Lower leg skin (tissue), 4 donors: ENCODE measurements at regions of chr3 and their contacts with region 1.

Region 1: DNA sequence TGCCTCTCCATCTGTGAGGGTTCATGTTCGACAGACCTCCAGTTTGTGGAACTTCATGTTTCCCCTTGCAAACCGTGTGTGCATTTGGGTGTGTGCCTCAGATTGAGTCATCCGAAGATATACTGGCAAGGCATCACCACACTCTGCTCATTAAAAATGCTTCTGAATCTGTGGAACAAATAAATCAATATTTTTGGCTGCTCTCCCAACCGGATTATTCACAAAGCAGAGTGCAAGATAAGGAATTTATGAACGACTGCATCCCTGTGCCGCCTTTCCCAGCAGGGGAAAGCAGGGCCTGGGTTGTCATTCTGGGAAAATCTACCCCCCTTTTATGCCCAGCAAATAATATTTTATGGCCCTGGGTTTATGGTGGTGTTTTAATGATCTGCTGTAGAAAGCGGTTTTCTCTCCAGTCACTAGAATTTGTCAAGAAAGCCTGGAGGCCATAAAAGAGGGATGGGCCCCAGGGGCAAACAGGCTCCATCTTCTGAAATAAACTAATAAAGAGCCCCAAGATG is 4.2 kb upstream of the WNT5A start:
- DNase-seq: no peak
- H3K4me3 ChIP-seq: no peak overlapping the region
- CTCF ChIP-seq: no peak
- POLR2A ChIP-seq: no peak

Region 2: GRCh38 chr3:54866251-54866650 is 625.1 kb before region 1 on chr3:
- intact Hi-C with region 1: loop called (anchors 5 kb)
- DNase-seq: peak in 1 of 2 donors; percentile 70
- H3K4me3 ChIP-seq: no peak overlapping the region
- CTCF ChIP-seq: no peak
- POLR2A ChIP-seq: no peak

Region 3: DNA sequence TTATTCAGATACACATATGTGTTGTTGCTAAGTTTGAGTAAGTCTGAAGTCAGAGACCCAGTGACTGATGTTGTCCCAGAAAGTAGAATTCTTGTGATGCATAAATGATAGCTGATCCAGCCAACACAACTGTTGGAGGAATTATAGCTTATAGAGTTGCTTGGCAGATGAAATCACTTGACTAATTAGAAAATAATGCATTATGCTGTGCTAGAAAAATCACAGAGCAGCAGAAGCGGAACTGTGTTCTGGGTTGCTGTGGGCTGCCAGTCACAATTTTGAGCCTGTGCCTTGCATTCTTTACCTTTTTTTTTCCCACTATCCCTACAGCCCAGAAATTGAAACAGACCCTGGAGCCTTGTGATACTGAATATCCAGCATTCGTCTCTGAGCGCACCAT is 473.5 kb before region 1 on chr3:
- intact Hi-C with region 1: no loop called
- DNase-seq: no peak
- H3K4me3 ChIP-seq: no peak overlapping the region
- CTCF ChIP-seq: no peak
- POLR2A ChIP-seq: no peak

Region 4: GRCh38 chr3:55169608-55170010 is 321.7 kb before region 1 on chr3:
- intact Hi-C with region 1: no loop called
- DNase-seq: no peak
- H3K4me3 ChIP-seq: no peak overlapping the region
- CTCF ChIP-seq: no peak
- POLR2A ChIP-seq: no peak

Region 5: DNA sequence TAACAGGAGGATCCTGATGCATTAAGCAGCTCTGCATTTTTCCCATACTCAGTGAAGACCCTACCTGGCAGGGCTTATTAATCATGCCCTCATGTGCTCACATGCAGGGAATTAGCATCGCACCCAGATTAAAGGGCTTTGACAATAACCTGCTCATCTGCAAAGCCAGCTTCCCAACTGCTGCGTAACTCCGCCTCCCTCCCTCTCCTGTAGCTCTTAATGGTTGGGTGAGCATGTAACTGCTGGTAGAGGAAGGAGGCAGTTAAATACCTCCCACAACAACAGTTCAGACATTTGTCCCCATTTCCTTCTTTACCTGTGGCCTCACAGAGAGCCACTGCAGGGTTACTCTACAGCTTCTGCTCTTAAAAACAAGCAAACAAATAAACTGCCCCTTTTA is 199.4 kb after region 1 on chr3:
- intact Hi-C with region 1: no loop called
- DNase-seq: no peak
- H3K4me3 ChIP-seq: no peak overlapping the region
- CTCF ChIP-seq: no peak
- POLR2A ChIP-seq: no peak